Activated T-helper 2 cell treated with anti-CD3 and anti-CD28 coated beads, Interferon-gamma antibody, Interleukin-2, Interleukin-4, amounts not matched to agents 10 μg/mL and 5 μg/mL and 100 μg/mL, durations not matched to agents 14 hours and 24 hours and 36 hours (primary cell): ENCODE measurements at regions of chr4 and their contacts with region 1.

Region 1: DNA sequence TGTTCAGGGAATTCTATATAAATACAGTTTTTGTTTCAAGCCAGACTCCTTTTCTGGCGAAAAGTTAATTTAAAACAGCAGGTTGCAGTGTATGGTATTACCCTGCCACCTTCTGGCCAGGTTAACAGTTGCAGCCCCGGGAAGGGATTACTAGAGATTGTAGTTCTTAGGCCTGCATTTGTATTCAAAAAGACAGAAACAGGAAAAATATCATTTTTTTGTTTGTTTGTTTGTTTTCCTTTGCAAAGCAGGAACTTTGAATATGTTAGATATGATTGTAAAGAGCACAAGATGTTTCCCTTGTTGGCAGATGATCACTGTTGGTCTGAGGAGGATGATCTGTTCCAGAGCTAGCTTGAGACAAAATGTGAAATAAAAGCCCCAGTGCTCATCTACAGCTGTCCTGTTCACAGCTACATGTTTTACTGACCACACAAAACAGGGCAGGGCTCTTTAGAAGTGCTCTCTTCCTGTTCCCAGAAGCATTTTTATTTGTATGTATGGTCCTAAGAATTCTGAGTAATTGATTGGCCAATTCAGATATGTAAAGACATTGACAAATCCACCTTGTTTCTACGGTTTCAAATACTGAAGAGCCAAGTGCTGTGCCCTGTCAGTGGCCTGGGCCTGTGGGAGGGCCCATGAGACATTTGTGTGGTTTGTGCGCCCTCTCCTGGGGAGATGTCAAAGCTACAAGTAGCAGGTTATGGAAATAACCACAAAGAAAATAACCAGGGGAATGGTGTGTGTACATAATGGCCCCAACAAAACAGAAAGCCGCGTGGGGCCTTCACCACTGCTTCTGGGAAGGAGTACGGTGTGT is 57.9 kb downstream of the CLDN22 start:
- DNase-seq: peak; percentile 60
- H3K4me3 Mint-ChIP-seq: no peak overlapping the region
- H3K27ac Mint-ChIP-seq: no peak overlapping the region
- H3K4me1 Mint-ChIP-seq: peaks cover 7% of the 10 kb centered on the region
- H3K27me3 Mint-ChIP-seq: peaks cover 11% of the 10 kb centered on the region

Region 2: DNA sequence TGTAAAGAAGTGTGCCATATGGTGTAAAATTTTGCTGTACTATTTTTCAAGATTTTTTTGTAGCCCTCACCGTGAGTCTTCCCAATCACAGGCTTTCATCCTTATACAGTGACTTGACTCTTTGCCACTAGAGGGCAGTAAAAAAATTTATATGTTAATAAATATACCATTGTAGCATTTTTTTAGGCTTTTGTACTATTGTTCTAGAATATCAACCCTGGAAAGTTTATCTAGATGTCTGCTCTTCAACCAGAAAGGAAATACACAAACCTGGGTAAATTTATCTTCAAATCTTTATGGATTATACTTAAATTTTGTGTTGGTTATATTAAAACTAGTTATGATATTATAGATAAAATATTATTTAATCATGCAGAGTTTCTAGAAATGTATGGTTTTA is 783.7 kb before region 1 on chr4:
- intact Hi-C with region 1: loop called (anchors 5 kb)
- DNase-seq: no peak
- H3K4me3 Mint-ChIP-seq: no peak overlapping the region
- H3K27ac Mint-ChIP-seq: no peak overlapping the region
- H3K4me1 Mint-ChIP-seq: no peaks in the 10 kb centered on the region
- H3K27me3 Mint-ChIP-seq: peaks cover 2% of the 10 kb centered on the region

Region 3: DNA sequence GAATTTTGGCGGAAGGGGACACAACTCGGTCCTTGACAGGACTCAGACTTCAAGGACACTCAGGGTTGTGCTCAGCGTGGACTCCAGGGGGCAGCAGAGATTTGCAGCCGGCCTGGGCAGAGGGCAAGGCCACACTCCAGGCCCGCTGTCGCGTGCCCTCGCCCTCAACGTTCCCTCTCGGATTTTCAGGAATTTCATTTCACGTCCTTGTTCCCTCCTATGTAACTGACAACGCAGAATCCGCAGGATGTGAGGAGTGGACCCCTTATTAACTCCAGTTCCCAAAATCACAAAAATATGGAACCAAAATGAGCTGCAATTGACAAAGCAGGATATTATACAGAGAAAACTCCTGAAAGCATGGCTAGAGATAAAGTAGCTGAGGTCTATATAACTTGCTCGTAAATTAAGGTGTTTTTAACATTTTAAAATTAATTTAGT is 323.9 kb before region 1 on chr4:
- intact Hi-C with region 1: loop called (anchors 1 kb)
- DNase-seq: peak; percentile 44
- H3K4me3 Mint-ChIP-seq: no peak overlapping the region
- H3K27ac Mint-ChIP-seq: no peak overlapping the region
- H3K4me1 Mint-ChIP-seq: no peaks in the 10 kb centered on the region
- H3K27me3 Mint-ChIP-seq: peaks cover 11% of the 10 kb centered on the region

Region 4: GRCh38 chr4:183073838-183074145 is 188.4 kb before region 1 on chr4:
- intact Hi-C with region 1: loop called (anchors 1 kb)
- DNase-seq: no peak
- H3K4me3 Mint-ChIP-seq: no peak overlapping the region
- H3K27ac Mint-ChIP-seq: no peak overlapping the region
- H3K4me1 Mint-ChIP-seq: no peaks in the 10 kb centered on the region
- H3K27me3 Mint-ChIP-seq: peaks cover 18% of the 10 kb centered on the region

Region 5: GRCh38 chr4:183407128-183407585 is 145.0 kb after region 1 on chr4:
- intact Hi-C with region 1: loop called (anchors 10 kb)
- DNase-seq: peak; percentile 84
- H3K4me3 Mint-ChIP-seq: peak overlapping the region; percentile 79
- H3K27ac Mint-ChIP-seq: peak overlapping the region; percentile 65
- H3K4me1 Mint-ChIP-seq: peaks cover 13% of the 10 kb centered on the region
- H3K27me3 Mint-ChIP-seq: peaks cover 7% of the 10 kb centered on the region

Region 6: GRCh38 chr4:184680698-184681097 is 1418.5 kb after region 1 on chr4:
- intact Hi-C with region 1: no loop called
- DNase-seq: no peak
- H3K4me3 Mint-ChIP-seq: no peak overlapping the region
- H3K27ac Mint-ChIP-seq: no peak overlapping the region
- H3K4me1 Mint-ChIP-seq: peaks cover 11% of the 10 kb centered on the region
- H3K27me3 Mint-ChIP-seq: no peaks in the 10 kb centered on the region